GM13977 (cell line): ENCODE measurements at regions of chr2 and their contacts with region 1.

Region 1: DNA sequence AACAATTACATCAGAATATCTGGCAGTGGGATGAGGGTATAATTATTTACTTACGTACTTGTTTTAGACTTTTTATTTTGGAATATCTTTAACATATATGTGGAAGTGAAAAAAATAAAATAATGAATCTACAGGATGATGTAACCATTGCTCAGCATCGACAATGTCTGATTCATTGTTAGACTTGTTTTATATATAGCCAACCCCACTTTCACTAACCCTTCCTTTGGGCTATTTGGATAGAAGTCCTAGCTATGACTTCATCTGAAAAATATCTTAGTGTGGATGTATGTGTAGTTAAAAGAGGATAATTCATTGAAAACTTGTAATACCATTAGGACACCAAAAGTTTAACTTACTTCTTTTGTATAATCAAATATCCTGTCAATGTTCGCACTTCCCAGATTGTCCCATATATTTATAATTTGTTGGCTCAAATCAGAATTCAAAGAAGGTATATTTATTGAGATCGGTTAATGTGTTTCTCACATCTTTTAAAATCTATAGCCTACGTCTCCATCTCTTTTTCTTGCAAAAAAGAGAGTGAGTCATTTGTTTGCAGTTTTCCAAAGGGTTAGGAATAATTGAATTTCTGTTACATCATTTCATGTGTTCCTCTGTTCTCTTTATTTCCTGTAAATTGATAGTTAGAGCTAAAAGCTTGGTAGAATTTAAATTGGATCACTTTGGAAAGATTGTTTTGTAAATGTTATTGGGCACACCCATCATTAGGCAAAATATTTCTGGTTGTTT is 506.1 kb upstream of the FAM98A start:
- DNase-seq: no peak
- CTCF ChIP-seq: no peak

Region 2: GRCh38 chr2:34337734-34338133 is 232.5 kb after region 1 on chr2:
- in situ Hi-C with region 1: no loop called
- DNase-seq: no peak
- CTCF ChIP-seq: no peak

Region 3: DNA sequence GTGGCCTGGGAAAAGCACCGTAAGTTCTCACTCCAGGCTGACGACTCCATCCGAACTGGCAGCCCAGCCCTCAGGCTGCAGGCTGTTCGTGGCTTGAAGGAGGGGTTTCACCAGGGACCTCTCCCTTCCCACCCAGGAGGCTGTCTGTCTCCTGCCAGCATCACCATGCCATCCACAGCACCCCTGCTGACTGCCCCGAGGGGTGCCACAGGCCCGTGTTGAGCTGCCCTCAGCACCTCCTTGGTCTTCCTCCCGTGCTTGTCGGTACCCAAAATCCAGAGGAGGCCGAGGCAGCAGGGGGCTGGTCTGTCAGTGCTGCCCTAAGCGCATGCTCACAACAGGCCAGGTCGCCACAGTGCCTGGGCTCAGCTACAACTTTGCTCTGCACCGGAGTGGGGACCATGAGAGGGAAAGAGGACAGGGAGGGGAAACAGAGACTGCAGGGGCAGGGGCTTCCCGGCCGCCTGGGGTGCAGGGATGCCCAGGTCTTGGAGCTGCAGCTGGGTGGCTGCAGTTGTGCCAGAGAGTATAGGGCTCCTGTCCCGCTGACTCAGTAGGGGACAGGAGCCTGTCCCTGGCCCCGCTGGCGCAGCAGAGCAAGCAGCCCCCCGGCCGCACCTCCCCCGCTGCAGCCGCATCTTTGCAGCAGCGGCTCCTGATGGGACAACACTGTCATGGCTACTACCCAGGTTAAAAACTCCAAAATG is 1286.7 kb after region 1 on chr2:
- in situ Hi-C with region 1: loop called (anchors 25 kb)
- DNase-seq: no peak
- CTCF ChIP-seq: no peak